Activated T-helper 1 cell treated with anti-CD3 and anti-CD28 coated beads, Interleukin-12 subunit alpha, Interleukin-12 subunit beta, Interleukin-2, Interleukin-4 antibody, amounts not matched to agents 30 ng/mL and 10 ng/mL and 1 ng/mL, durations not matched to agents 14 hours and 24 hours and 36 hours (primary cell): ENCODE measurements at regions of chr2 and their contacts with region 1.

Region 1: GRCh38 chr2:121736462-121737341 is at the start of gene NIFK:
- DNase-seq: peak; percentile 99
- H3K4me3 Mint-ChIP-seq: peak within 1 kb of the TSS; percentile 89
- H3K27ac Mint-ChIP-seq: peak within 1 kb of the TSS; percentile 95
- H3K4me1 Mint-ChIP-seq: peaks cover 22% of the 10 kb centered on the region
- H3K27me3 Mint-ChIP-seq: no peaks in the 10 kb centered on the region
- total RNA-seq, gene NIFK: 150 TPM in 2 replicates

Region 2: DNA sequence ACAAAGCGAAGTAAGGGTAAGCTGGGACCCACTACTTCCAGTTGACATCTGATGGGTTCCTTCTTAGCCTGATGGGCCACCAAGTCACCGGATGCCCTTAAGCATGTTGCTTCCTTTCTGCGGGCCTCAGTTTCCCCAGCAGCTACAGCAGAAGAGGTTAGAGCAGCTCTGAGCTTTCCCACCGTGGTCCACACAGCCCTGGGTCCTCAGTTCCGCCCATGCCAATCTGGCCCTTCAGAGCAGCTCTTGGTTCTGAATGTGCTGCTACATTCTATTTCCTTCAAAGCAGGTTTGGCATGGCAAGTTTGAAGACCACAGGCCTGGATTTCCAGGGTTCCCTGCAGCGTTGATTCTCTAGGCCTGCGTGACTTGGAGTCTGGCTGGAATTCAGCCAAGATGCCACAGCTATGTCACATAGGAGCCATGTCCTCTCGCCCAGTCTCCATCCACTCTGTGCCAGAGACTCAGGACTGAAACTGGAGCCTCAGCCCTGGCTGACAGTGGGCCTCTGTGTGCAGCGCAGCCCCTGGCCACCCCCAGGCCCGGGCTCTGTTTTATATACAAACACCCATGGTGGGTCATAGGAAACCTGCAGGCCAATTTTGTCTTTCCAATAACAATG is 531.3 kb before region 1 on chr2:
- intact Hi-C with region 1: no loop called
- DNase-seq: no peak
- H3K4me3 Mint-ChIP-seq: no peak overlapping the region
- H3K27ac Mint-ChIP-seq: no peak overlapping the region
- H3K4me1 Mint-ChIP-seq: no peaks in the 10 kb centered on the region
- H3K27me3 Mint-ChIP-seq: no peaks in the 10 kb centered on the region

Region 3: GRCh38 chr2:121451398-121451797 is 285.3 kb before region 1 on chr2:
- intact Hi-C with region 1: loop called (anchors 1 kb)
- DNase-seq: no peak
- H3K4me3 Mint-ChIP-seq: no peak overlapping the region
- H3K27ac Mint-ChIP-seq: no peak overlapping the region
- H3K4me1 Mint-ChIP-seq: no peaks in the 10 kb centered on the region
- H3K27me3 Mint-ChIP-seq: no peaks in the 10 kb centered on the region

Region 4: DNA sequence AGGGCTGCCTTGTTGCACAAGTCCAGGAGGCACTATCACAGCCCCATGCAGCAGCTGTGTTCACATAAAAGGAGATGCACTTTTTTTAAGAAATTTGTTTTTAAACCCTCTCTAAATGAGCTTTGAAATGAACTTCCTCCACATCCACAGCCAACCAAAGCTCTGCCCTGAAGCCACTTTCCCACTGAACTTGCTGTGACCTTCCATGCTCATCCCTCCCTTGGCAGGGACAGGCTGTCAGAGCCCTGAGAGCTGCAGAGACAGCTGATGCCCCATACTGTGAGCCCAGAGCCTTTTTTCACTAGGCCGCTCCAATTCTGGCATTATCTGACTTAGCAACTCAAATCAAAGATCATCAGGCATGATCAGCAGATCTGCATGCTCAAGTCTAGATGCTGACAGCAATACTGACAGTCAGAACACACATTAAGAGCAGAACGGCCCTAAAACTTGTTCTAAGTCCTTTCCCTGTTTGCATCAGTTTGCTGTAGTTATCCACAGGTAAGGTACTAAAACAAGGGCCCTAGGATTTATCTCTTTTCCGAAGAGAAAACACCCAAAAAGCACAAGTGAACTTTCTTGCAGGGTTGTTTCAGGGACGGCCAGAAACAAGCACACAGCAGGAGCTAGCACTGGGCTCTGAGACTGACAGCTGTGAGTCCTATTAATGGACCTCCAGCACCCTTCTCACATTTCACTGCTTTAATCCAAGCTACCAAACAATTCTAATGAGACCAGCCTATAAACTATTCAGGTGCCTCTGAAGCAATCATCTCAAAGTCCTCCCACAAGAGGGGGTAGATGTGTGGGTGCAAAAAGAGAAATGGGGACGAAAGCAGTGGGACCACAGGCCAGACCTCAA is 171.1 kb before region 1 on chr2:
- intact Hi-C with region 1: no loop called
- DNase-seq: no peak
- H3K4me3 Mint-ChIP-seq: no peak overlapping the region
- H3K27ac Mint-ChIP-seq: no peak overlapping the region
- H3K4me1 Mint-ChIP-seq: peaks cover 21% of the 10 kb centered on the region
- H3K27me3 Mint-ChIP-seq: no peaks in the 10 kb centered on the region

Region 5: GRCh38 chr2:121596221-121597080 is 140.3 kb before region 1 on chr2:
- intact Hi-C with region 1: loop called (anchors 1 kb)
- DNase-seq: no peak
- H3K4me3 Mint-ChIP-seq: peak overlapping the region; percentile 60
- H3K27ac Mint-ChIP-seq: peak overlapping the region; percentile 61
- H3K4me1 Mint-ChIP-seq: peaks cover 58% of the 10 kb centered on the region
- H3K27me3 Mint-ChIP-seq: no peaks in the 10 kb centered on the region

Region 6: DNA sequence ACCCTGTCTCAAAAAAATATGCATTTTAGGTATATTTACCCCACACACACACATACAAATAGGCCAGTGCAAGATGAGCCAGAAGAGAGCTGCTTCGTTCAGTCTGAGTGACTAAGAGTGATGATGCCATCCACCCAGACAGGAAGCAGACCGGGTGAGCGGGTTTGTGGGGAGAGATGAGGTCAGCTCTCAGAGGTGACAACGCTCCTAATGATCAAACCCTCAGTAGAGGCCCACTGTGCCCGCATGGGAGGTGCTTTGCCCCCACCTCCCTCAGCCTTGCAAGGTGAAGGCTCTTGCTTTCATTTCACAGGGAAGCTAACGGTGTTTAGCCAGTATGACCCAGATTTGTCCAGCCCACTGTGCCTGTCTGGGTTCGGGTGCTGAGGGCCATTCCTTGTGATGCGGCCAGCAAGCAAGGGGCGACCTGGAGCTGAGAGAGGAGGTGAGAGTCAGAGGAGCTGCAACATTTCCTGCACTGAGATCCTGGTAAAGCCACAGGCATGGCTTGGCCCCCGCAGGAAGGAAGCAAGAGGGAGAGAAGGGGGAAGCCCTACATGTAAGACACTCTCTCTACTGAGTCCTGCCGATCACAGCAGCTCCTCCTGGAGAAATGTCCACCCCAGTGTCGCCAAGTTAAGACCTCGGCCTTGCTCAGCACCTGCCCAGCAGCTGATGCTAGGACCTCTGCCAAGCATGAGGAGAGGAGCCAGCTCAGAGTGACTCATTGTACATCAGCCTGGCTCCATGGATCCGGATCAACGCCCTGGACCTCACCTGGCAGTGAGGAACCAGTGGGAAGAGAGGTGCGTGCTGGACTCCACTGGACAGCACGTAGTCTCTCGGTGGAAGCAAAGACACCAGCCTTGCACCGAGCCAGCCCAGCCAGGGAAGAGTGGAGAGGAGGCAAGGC is 37.0 kb before region 1 on chr2:
- intact Hi-C with region 1: loop called (anchors 1 kb)
- DNase-seq: peak; percentile 83
- H3K4me3 Mint-ChIP-seq: peak overlapping the region; percentile 85
- H3K27ac Mint-ChIP-seq: peak overlapping the region; percentile 95
- H3K4me1 Mint-ChIP-seq: peaks cover 48% of the 10 kb centered on the region
- H3K27me3 Mint-ChIP-seq: peaks cover 2% of the 10 kb centered on the region

Region 7: DNA sequence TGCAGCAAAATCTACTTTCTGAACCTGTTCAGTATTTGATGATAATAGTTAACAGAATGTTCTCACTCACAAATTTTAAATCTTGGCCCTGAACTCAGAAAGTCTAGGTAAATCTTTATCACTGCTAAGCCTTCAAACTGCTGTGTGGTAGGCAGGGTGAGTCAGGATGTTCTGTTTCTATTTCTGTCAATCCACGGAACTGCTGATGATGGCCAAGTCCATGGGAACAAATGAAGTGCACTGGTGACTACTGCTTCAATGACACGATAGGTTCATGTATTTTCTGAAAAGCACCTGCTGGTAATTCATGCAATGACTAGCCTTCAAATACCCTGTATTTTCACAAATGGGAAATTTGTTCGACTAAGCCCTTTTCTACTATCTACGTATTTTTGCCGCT is 14.2 kb before region 1 on chr2:
- intact Hi-C with region 1: loop called (anchors 2 kb)
- DNase-seq: no peak
- H3K4me3 Mint-ChIP-seq: no peak overlapping the region
- H3K27ac Mint-ChIP-seq: peak overlapping the region; percentile 84
- H3K4me1 Mint-ChIP-seq: peaks cover 15% of the 10 kb centered on the region
- H3K27me3 Mint-ChIP-seq: no peaks in the 10 kb centered on the region

Region 8: GRCh38 chr2:121755236-121756111 is 18.8 kb after region 1 on chr2 and contains the start of gene TSN:
- intact Hi-C with region 1: loop called (anchors 1 kb)
- DNase-seq: peak; percentile 97
- H3K4me3 Mint-ChIP-seq: peak within 1 kb of the TSS; percentile 94
- H3K27ac Mint-ChIP-seq: peak within 1 kb of the TSS; percentile 92
- H3K4me1 Mint-ChIP-seq: peaks cover 26% of the 10 kb centered on the region
- H3K27me3 Mint-ChIP-seq: no peaks in the 10 kb centered on the region
- total RNA-seq, gene TSN: 72.3 and 80.1 TPM in 2 replicates